ENCODE measurements at regions of chr21 and their contacts with region 1.

Region 1: DNA sequence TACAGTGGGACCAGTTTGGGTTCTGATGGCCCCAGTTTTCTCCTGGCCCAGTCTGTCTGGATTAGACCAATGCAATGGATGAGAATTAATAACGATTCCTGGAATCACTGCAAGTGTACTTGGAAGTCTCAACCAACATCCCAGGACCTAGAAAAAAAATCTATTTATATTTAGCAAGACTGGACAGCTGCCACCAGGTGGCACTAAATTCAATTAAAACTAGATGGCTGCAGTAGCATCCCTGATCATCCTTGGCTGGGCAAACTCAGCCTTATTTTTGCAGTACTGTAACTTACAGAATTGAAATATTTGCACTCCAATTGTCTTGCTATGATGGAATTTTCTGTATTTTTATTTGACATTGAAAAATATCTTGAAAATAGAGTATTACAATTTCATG is 165.7 kb downstream of the NCAM2 start:
- DNase-seq: peak in 1 of 2 experiments; percentile 16
- H3K4me3 ChIP-seq: no peak overlapping the region
- H3K27ac ChIP-seq: no peak overlapping the region
- H3K4me1 ChIP-seq: no peaks in the 10 kb centered on the region
- H3K27me3 ChIP-seq: no peaks in the 10 kb centered on the region
- CTCF ChIP-seq: peak; percentile 64

Region 2: DNA sequence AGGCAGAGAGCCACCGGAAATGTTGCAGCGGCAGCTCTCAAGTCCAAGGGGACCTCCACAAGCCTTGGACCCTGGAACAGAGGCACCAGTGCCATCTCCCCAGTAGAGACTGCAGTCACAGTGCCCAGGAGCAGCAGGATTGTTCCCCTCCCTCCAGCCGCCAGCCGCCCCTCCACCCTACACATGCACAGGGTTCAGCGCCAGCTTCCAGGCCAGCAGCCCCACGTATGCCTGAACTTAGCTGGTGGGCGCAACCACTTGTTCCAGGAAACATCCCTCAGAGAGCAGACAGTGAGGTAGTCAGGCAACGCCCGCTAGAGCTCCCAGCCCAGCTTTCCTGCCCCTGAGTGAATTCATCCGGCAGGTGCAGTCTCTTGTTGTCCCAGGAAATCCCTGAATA is 1263.8 kb before region 1 on chr21:
- CTCF ChIA-PET with region 1: no interaction called
- POLR2A ChIA-PET with region 1: no interaction called
- intact Hi-C with region 1: no loop called
- DNase-seq: no peak
- H3K4me3 ChIP-seq: no peak overlapping the region
- H3K27ac ChIP-seq: no peak overlapping the region
- H3K4me1 ChIP-seq: no peaks in the 10 kb centered on the region
- H3K27me3 ChIP-seq: no peaks in the 10 kb centered on the region
- CTCF ChIP-seq: no peak

Region 3: GRCh38 chr21:21226472-21226871 is 62.6 kb after region 1 on chr21:
- CTCF ChIA-PET with region 1: no interaction called
- POLR2A ChIA-PET with region 1: no interaction called
- intact Hi-C with region 1: loop called (anchors 10 kb)
- DNase-seq: no peak
- H3K4me3 ChIP-seq: no peak overlapping the region
- H3K27ac ChIP-seq: no peak overlapping the region
- H3K4me1 ChIP-seq: no peaks in the 10 kb centered on the region
- H3K27me3 ChIP-seq: no peaks in the 10 kb centered on the region
- CTCF ChIP-seq: no peak

Region 4: GRCh38 chr21:21373969-21374368 is 210.1 kb after region 1 on chr21:
- CTCF ChIA-PET with region 1: no interaction called
- POLR2A ChIA-PET with region 1: no interaction called
- intact Hi-C with region 1: loop called (anchors 5 kb)
- DNase-seq: no peak
- H3K4me3 ChIP-seq: no peak overlapping the region
- H3K27ac ChIP-seq: no peak overlapping the region
- H3K4me1 ChIP-seq: no peaks in the 10 kb centered on the region
- H3K27me3 ChIP-seq: no peaks in the 10 kb centered on the region
- CTCF ChIP-seq: peak; percentile 29; the same call in 1 of the 2 replicates

Region 5: DNA sequence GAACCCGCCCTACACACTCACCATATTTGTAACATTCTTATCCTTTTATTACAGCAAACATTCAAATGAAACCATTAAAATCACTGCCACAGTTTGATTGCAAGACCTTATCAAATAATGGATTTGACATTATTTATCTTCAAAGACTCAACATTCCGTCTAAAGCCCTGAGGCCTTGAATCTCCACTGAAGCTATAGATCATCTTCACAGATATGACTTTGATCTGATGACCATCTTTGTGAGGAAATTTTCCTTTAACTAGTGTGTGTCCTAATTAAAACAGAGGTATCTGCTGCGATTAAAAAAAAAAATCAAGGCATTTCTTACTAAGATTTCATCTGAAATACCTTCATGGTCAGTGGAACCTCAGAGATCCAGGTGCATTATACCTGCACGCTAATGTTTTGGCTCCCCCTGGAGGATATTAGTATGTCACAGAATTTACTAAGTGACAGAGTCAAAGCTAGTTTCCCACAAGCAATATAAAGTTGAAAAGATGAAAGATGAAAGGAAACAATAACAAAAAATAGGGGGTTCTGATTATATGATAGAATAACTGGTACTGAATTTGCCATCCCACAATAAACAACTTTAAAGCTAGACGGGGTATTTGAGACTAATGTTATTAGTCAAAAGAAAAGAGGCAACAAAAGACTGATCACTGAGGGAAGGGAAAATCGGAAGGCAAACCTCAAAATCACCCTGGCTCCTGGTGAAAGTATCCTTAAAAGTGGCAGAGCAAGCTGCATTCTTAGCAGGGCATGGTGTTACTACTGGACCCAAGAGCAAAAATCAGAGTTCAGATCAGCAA is 757.7 kb after region 1 on chr21:
- CTCF ChIA-PET with region 1: no interaction called
- POLR2A ChIA-PET with region 1: no interaction called
- intact Hi-C with region 1: loop called (anchors 2 kb)
- DNase-seq: no peak
- H3K4me3 ChIP-seq: no peak overlapping the region
- H3K27ac ChIP-seq: no peak overlapping the region
- H3K4me1 ChIP-seq: no peaks in the 10 kb centered on the region
- H3K27me3 ChIP-seq: no peaks in the 10 kb centered on the region
- CTCF ChIP-seq: peak; percentile 69

Region 6: DNA sequence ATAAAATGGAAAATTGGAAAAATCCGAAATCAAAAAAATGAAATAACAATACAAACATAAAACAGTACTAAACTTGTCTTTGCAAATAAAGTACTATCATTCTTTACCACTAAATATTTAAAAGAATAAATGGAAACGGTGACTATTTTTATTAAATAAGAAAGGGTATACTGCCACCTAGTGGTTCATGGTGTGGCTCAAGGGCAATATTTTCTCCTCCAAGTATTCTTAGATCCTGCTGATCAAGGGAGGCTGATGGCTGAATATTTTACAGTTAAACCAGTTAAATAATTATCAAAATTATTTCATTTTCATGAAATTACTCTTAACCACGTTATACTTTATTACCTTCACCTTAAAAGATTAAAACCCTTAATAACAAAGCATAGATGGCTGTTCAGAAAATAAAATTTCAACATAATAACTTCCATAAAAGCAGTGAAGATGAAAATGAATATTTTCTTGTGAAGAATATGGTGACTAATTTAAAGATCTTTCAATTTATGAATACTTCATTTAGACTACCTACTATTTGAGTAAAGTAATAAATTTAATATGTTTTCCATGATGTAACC is 1628.2 kb after region 1 on chr21:
- CTCF ChIA-PET with region 1: no interaction called
- POLR2A ChIA-PET with region 1: no interaction called
- intact Hi-C with region 1: loop called (anchors 10 kb)
- DNase-seq: no peak
- H3K4me3 ChIP-seq: no peak overlapping the region
- H3K27ac ChIP-seq: no peak overlapping the region
- H3K4me1 ChIP-seq: no peaks in the 10 kb centered on the region
- H3K27me3 ChIP-seq: no peaks in the 10 kb centered on the region
- CTCF ChIP-seq: peak; percentile 78

Measured in PC-9 (cell line).